AG04450 (cell line): ENCODE measurements at regions of chr2 and their contacts with region 1.

Region 1: GRCh38 chr2:179422037-179422643 is 157.5 kb upstream of the SESTD1 start:
- DNase-seq: peak; percentile 60
- H3K4me3 ChIP-seq: no peak overlapping the region
- H3K27ac ChIP-seq: no peak overlapping the region
- H3K27me3 ChIP-seq: no peaks in the 10 kb centered on the region
- CTCF ChIP-seq: peak; percentile 90

Region 2: DNA sequence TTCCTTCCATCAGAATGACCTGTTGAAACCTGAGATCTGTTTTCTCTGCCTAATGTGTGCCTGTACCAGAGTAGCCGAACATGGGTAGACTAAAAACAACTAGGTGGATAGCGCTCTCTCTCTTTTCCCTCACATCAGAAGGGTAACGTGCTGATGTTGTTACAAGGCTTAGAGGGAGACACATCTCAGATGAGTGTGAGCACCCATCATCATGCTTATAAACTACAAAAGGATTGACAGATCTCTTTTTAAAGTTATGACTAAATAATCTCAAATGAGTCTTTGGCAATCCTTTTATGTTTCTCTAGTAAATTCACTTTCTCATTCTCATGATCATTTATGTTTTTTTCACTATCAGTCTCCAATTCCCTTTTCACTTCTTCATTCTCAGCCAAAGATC is 296.7 kb before region 1 on chr2:
- CTCF ChIA-PET with region 1: no interaction called
- POLR2A ChIA-PET with region 1: no interaction called
- DNase-seq: no peak
- H3K4me3 ChIP-seq: no peak overlapping the region
- H3K27ac ChIP-seq: no peak overlapping the region
- H3K27me3 ChIP-seq: no peaks in the 10 kb centered on the region
- CTCF ChIP-seq: no peak

Region 3: DNA sequence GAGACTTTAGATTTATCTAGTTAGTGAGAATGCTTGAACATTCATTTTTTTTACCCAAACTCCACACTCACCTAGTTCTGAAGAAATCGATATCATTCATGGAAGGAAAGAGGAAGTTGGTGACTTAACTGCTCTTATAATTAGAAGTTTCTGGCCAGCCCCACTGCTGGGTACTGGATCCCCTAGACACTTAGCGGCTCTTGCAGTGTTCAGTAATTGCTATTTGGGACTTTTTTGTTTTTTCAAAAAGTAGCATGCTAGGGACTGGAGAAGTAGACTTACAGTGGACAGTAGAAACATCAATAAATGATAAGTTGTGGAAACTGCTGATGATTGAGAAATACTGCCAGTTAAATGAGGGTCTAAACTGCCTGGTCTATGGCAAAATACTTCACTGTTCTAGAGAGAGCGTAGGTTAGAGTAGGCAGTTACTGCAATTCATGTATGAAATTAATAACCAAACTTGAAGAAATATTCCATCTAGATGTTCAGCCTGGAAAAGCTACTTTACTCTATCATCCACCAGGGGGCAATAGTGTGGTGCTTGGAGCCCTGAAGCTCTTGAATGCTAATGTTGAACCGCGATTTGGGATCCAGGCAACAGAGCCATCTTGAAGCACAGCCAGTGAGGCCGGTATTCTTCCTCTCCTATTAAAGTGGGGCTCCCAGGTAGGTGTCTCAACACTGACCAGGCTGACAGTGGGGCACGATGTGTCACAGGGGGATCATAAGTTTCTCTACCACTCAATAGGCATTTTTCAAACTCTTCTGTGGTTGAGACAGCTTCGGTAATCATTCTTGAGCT is 11.4 kb before region 1 on chr2:
- CTCF ChIA-PET with region 1: interaction called, 36 read pairs
- POLR2A ChIA-PET with region 1: no interaction called
- DNase-seq: peak; percentile 23
- H3K4me3 ChIP-seq: no peak overlapping the region
- H3K27ac ChIP-seq: no peak overlapping the region
- H3K27me3 ChIP-seq: no peaks in the 10 kb centered on the region
- CTCF ChIP-seq: peak; percentile 82

Region 4: GRCh38 chr2:179435000-179435399 is 12.9 kb after region 1 on chr2:
- CTCF ChIA-PET with region 1: interaction called, 33 read pairs
- POLR2A ChIA-PET with region 1: no interaction called
- DNase-seq: no peak
- H3K4me3 ChIP-seq: no peak overlapping the region
- H3K27ac ChIP-seq: no peak overlapping the region
- H3K27me3 ChIP-seq: no peaks in the 10 kb centered on the region
- CTCF ChIP-seq: no peak

Region 5: GRCh38 chr2:179440642-179441251 is 18.6 kb after region 1 on chr2:
- CTCF ChIA-PET with region 1: interaction called, 33 read pairs
- POLR2A ChIA-PET with region 1: no interaction called
- DNase-seq: no peak
- H3K4me3 ChIP-seq: no peak overlapping the region
- H3K27ac ChIP-seq: no peak overlapping the region
- H3K27me3 ChIP-seq: no peaks in the 10 kb centered on the region
- CTCF ChIP-seq: peak; percentile 54

Region 6: GRCh38 chr2:179724403-179724802 is 302.3 kb after region 1 on chr2:
- CTCF ChIA-PET with region 1: interaction called, 10 read pairs
- POLR2A ChIA-PET with region 1: no interaction called
- DNase-seq: no peak
- H3K4me3 ChIP-seq: no peak overlapping the region
- H3K27ac ChIP-seq: no peak overlapping the region
- H3K27me3 ChIP-seq: no peaks in the 10 kb centered on the region
- CTCF ChIP-seq: no peak

Region 7: DNA sequence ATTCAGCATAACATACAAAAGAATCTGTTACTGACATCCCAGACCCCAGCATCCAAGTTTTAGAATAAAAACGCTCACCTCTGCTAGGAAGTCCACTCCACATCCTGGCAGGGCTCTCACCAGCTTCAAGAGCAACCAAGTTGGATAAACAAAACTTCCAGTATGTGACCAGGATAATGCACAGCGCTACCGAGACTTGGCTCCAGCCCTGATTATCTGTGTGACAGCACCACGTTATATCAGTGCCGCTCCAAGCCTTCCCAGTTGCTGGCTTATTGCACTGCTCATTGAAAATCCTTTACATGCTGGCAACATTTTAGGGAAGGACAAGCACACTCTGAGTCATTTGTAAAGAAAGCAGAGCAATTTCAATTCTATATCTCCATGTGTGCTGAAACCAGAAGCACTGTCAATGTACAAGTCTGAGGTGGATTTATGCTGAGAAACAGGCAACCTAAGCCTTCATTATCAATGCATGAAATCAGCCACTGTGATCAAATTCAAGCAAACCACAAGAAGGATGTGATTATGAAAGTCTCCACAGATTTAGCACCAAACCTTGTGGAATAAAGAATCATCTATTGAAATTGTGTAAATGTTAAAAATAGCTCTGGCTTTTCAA is 323.6 kb after region 1 on chr2:
- CTCF ChIA-PET with region 1: interaction called, 27 read pairs
- POLR2A ChIA-PET with region 1: no interaction called
- DNase-seq: no peak
- H3K4me3 ChIP-seq: no peak overlapping the region
- H3K27ac ChIP-seq: no peak overlapping the region
- H3K27me3 ChIP-seq: no peaks in the 10 kb centered on the region
- CTCF ChIP-seq: no peak

Region 8: DNA sequence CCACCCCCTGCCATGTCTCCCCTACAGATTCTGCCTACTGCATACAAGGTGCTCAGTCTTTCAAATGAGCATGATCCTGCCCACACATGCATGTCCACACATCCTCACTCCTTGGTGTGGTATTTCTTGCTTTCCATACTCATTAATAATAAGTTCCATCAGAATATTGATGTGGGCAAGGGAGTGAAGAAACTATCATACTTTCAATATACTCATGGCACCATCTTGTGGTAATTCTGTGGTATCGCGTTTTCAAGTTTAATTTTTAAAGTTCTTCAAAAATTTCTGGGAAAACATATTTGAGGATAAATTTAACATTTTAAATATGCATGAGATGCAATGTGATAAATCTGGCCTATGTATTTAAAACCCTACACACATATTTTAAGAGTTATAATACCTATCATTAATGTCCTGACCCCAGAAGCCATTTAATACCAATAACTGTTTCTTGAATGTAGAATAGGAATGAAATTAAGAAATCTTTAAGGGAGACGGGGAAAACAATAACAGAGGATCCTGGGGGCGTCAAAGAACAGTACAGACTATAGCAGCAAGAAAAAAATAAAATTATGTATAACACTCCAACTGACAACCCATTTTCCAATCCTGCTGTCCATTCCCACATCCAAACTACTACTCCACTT is 329.1 kb after region 1 on chr2:
- CTCF ChIA-PET with region 1: interaction called, 27 read pairs
- POLR2A ChIA-PET with region 1: no interaction called
- DNase-seq: no peak
- H3K4me3 ChIP-seq: no peak overlapping the region
- H3K27ac ChIP-seq: no peak overlapping the region
- H3K27me3 ChIP-seq: no peaks in the 10 kb centered on the region
- CTCF ChIP-seq: peak; percentile 68